Head of caudate nucleus (tissue), 42 donors: ENCODE measurements at regions of chr5 and their contacts with region 1.

Region 1: GRCh38 chr5:179166886-179167841 is 107.0 kb downstream of the ZNF354C start:
- DNase-seq: peak; percentile 11 to 89 (median 68)

Region 2: GRCh38 chr5:179110528-179110927 is 56.6 kb before region 1 on chr5:
- intact Hi-C with region 1: no loop called
- DNase-seq: no peak

Region 3: GRCh38 chr5:179265514-179266290 is 98.5 kb after region 1 on chr5:
- intact Hi-C with region 1: loop called (anchors 10 kb)
- DNase-seq: peak in 41 of 42 donors; percentile 23 to 83 (median 53)

Region 4: DNA sequence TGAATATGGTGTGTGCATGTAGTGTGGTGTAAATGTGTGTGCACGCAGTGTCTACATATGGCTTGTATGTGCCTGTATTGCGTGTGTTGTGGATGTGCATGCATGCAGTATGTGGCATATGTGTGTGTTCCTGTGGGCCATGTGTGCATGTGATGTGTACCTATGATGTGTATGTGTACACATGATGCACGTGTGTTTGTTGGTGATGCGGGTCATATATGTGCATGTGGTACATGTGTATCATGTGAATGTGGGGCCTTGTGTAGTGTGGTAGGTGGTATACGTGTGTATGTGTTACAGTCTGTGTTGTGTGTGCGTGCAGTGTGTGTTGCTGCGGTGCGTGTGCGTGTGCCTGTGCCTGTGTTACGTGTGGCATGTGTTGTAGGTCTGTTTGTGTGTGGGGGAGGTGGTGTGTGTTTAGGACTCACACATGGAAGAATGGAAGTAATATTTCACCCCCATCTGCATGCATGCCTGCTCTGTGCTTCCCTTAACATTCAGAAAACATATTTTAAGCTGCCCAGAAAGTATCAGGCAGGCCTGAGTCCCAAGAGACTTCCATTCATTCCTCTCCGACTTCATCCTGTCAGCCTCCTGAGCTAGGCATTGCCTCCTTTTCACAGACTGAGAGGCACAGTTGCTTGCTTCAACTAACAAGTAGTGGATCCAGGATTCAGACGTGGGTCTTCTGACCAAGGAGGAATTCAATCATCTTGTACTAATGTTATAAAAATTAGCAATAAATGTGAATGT is 327.8 kb after region 1 on chr5:
- intact Hi-C with region 1: loop called (anchors 5 kb)
- DNase-seq: peak in 1 of 42 donors; percentile 18